B cell (primary cell): ENCODE measurements at regions of chr10 and their contacts with region 1.

Region 1: DNA sequence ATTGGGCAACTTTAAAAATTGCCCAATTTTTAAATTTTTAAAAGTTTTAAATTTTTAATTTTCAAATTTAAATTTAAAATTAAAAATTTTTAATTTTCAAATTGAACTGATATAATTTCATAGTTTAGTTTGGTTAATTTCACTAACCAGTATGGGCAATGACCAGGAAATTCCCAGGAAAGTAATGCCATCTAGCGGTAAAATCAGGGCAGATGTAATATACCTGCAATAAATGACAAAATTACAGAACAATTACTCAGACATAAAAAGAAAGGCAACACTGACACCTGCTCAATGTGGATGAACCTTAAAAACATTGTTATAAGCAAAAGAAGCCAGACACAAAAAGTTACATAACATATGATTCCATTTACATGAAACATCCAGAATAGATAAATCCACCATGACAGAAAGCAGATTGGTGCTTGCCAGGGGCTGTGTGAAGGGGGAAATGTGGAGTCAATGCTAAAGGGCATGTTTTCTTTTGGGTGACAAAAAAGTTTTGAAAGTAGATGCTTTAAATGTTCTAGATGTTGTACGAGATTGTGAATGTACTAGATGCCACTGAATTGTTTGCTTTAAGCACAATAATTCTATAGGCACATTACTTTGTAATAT is 28.6 kb upstream of the SLC16A12 start:
- DNase-seq: peak; percentile 67
- ATAC-seq: peak; percentile 53
- H3K4me3 ChIP-seq: no peak overlapping the region
- H3K4me3 Mint-ChIP-seq: no peak overlapping the region
- H3K27ac ChIP-seq: no peak overlapping the region
- H3K27ac Mint-ChIP-seq: no peak overlapping the region
- H3K4me1 ChIP-seq: no peaks in the 10 kb centered on the region
- H3K4me1 Mint-ChIP-seq: no peaks in the 10 kb centered on the region
- H3K27me3 ChIP-seq: no peaks in the 10 kb centered on the region
- H3K27me3 Mint-ChIP-seq: peaks cover 9% of the 10 kb centered on the region
- CTCF ChIP-seq: peak; percentile 84

Region 2: DNA sequence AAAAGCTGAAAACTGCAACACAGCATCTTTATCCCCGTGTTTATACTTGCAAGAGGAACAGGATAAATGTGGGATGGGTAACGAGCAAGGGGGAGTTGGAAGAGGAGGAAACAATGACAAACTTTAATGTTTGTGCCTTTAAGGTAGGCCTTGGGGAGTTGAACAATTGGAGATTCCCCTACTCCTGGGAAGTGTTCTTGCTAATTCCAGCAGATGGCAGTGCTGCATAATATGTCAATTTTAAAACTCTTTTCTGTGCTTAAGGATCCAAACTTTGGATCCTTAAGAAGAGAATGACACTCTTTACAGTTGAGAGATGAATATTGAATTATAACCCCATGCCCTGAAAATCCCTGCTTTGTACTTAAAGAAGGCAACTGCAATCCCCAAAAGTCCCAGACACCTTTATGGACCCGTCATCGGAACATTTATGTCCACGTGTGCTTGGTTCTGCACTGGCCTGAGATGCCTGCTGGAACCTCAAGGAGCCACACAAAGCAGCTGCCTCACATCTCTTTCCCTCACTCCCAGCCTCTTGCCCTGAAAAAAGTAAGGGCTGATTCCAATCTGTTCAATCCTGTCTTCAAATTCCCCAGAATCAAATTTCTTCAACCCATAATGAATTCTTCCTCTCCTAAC is 137.6 kb before region 1 on chr10:
- CTCF ChIA-PET with region 1: interaction called, 6 read pairs
- POLR2A ChIA-PET with region 1: no interaction called
- intact Hi-C with region 1: loop called (anchors 1 kb)
- DNase-seq: peak; percentile 58
- ATAC-seq: no peak
- H3K4me3 ChIP-seq: no peak overlapping the region
- H3K4me3 Mint-ChIP-seq: no peak overlapping the region
- H3K27ac ChIP-seq: no peak overlapping the region
- H3K27ac Mint-ChIP-seq: no peak overlapping the region
- H3K4me1 ChIP-seq: peaks cover 3% of the 10 kb centered on the region in 2 donors
- H3K4me1 Mint-ChIP-seq: peaks cover 6% of the 10 kb centered on the region
- H3K27me3 ChIP-seq: no peaks in the 10 kb centered on the region
- H3K27me3 Mint-ChIP-seq: no peaks in the 10 kb centered on the region
- CTCF ChIP-seq: peak; percentile 76

Region 3: GRCh38 chr10:89466599-89467035 is 97.4 kb before region 1 on chr10:
- CTCF ChIA-PET with region 1: interaction called, 7 read pairs
- POLR2A ChIA-PET with region 1: no interaction called
- intact Hi-C with region 1: loop called (anchors 5 kb)
- DNase-seq: peak; percentile 33
- ATAC-seq: peak; percentile 57
- H3K4me3 ChIP-seq: no peak overlapping the region
- H3K4me3 Mint-ChIP-seq: no peak overlapping the region
- H3K27ac ChIP-seq: no peak overlapping the region
- H3K27ac Mint-ChIP-seq: no peak overlapping the region
- H3K4me1 ChIP-seq: peaks cover 0 to 2% of the 10 kb centered on the region in 2 donors
- H3K4me1 Mint-ChIP-seq: peaks cover 2% of the 10 kb centered on the region
- H3K27me3 ChIP-seq: no peaks in the 10 kb centered on the region
- H3K27me3 Mint-ChIP-seq: peaks cover 11% of the 10 kb centered on the region
- CTCF ChIP-seq: peak; percentile 24